HEK293 (cell line): ENCODE measurements at regions of chr21 and their contacts with region 1.

Region 1: DNA sequence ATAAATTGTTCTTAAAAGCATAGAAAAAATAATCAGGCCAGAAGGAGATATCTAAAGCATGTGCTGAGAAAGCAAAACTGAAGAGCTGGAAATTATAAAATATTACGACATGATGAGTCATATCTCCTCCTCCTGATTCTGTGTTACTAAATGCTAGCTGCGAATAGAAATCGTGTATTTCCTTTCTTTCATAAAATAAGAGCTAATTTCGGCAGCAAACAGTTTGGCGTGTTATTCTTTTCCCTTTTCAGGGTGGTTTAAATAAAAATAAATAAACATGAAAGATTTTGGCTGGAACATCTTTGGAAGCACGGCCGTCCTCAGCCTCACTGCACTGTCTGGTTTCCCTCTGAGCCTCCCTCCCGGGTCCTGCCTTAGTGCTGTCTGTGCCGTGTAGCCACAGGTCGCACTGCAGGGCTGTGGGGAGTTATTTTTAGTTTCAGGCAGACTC is 56.0 kb downstream of the ADARB1 start:
- H3K4me3 ChIP-seq: peak overlapping the region; percentile 8
- H3K27ac ChIP-seq: 0 out of 2 replicates have a peak overlapping the region, but pooled peaks have one; percentile 14
- H3K4me1 ChIP-seq: peaks cover 11% of the 10 kb centered on the region
- CTCF ChIP-seq: no peak

Region 2: GRCh38 chr21:44958471-44959191 is 171.7 kb before region 1 on chr21:
- CTCF ChIA-PET with region 1: interaction called, 333 read pairs
- POLR2A ChIA-PET with region 1: no interaction called
- H3K4me3 ChIP-seq: no peak overlapping the region
- H3K27ac ChIP-seq: no peak overlapping the region
- H3K4me1 ChIP-seq: no peaks in the 10 kb centered on the region
- CTCF ChIP-seq: no peak

Region 3: GRCh38 chr21:45087022-45087823 is 43.1 kb before region 1 on chr21:
- CTCF ChIA-PET with region 1: interaction called, 12 read pairs
- POLR2A ChIA-PET with region 1: no interaction called
- H3K4me3 ChIP-seq: no peak overlapping the region
- H3K27ac ChIP-seq: no peak overlapping the region
- H3K4me1 ChIP-seq: no peaks in the 10 kb centered on the region; the same call in 1 of the 2 replicates
- CTCF ChIP-seq: no peak

Region 4: GRCh38 chr21:45104560-45104959 is 25.8 kb before region 1 on chr21:
- CTCF ChIA-PET with region 1: interaction called, 40 read pairs
- POLR2A ChIA-PET with region 1: no interaction called
- H3K4me3 ChIP-seq: no peak overlapping the region
- H3K27ac ChIP-seq: no peak overlapping the region
- H3K4me1 ChIP-seq: peaks cover 14% of the 10 kb centered on the region; the same call in 1 of the 2 replicates
- CTCF ChIP-seq: no peak

Region 5: GRCh38 chr21:45200581-45201296 is 70.4 kb after region 1 on chr21:
- CTCF ChIA-PET with region 1: no interaction called
- POLR2A ChIA-PET with region 1: no interaction called
- H3K4me3 ChIP-seq: no peak overlapping the region
- H3K27ac ChIP-seq: no peak overlapping the region
- H3K4me1 ChIP-seq: no peaks in the 10 kb centered on the region
- CTCF ChIP-seq: no peak

Region 6: DNA sequence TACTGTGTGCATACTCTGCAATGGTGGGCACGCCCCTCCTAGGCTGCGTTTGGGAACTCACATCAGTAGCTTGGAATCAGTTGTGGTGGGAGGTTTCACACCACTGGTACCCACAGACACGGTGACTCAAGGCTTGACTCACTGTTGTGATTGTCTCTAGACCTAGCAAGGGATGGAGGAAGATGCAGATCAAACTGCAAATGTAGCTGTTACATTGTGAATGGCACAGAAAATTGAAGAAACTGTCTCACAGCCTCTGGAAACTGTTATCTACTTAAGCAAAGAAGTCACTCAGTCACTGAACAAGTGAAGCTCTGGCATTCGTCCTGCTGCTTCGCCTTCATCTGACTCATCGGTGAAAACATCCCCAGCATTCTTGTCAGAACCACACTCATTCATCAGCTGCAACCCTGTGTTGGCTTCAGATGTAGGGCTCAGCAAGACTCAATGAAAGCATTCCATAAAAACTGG is 97.9 kb after region 1 on chr21:
- CTCF ChIA-PET with region 1: no interaction called
- POLR2A ChIA-PET with region 1: no interaction called
- H3K4me3 ChIP-seq: no peak overlapping the region
- H3K27ac ChIP-seq: no peak overlapping the region
- H3K4me1 ChIP-seq: no peaks in the 10 kb centered on the region
- CTCF ChIP-seq: no peak